Mucosa of descending colon (tissue), 3 donors: ENCODE measurements at regions of chr1 and their contacts with region 1.

Region 1: DNA sequence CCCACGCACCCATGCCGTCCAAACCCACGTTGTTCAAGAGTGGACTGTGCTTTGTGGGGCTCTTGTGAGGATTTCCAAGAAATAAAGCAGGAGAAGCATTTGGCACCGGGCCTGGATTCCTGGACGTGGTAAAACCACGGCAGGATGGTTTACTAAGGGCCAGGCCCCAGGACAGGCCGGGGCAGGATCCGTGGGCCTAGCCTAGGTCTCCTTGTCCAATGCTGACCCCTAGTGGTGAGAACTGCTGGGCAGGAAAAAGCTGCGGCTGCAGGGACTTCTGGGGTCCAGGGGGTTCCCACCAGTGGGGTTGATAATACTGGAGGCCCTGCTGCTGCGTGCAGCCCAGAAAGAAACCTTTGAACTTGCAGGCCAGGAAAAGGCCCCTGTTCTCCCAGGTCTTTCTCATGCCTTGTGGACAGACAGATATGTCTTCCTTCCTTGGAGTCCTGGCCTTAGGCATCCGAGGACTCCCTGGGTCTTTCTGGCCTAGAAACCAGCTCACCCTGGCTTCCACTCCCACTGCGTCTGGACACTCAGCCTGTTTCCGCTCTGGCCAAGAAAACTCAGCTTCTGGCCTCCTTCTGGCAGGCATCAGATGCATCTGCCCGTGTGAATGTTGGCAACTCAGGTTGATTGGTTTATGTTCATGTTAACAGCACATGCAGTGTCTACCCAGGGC is 106.9 kb upstream of the TMEM51 start:
- DNase-seq: peak; percentile 63 to 86 (median 70)
- ATAC-seq: peak; percentile 84
- H3K4me3 ChIP-seq: no peak overlapping the region
- H3K4me1 ChIP-seq: no peaks in the 10 kb centered on the region
- CTCF ChIP-seq: peak; percentile 83

Region 2: DNA sequence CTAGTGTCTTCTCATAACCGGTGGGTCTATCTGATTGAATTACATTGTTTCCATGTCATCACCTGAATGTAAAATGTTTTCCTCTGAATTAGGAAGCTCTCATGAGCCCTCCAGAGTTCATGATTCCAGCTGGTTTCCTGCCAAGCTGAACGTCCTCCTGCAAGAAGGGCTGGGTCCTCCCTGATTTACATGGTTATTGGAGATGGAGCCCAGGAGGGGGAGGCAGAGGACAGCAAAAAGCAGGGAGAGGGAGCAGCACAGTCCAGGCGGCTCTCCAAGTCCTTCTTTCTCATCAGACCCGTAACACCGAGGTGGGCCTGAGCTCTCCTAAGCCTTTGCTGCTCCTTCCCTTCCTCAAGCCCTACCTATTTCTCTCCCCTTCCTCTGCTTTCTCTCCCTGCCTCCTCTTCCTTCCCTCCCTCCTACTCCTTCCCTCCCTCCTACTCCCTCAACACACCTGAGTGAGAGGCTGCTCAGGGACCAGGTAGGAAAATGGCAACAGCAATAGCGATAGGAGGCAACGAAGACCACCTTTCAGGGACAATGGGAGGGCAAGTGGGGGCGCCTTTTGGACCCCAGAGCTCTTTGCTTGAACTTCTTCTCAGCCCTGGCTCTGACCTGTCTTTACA is 1080.7 kb before region 1 on chr1:
- intact Hi-C with region 1: loop called in 1 of 2 experiments (anchors 5 kb)
- DNase-seq: peak in 2 of 3 donors; percentile 49 to 52
- ATAC-seq: peak; percentile 79
- H3K4me3 ChIP-seq: no peak overlapping the region
- H3K4me1 ChIP-seq: no peaks in the 10 kb centered on the region
- CTCF ChIP-seq: no peak

Region 3: DNA sequence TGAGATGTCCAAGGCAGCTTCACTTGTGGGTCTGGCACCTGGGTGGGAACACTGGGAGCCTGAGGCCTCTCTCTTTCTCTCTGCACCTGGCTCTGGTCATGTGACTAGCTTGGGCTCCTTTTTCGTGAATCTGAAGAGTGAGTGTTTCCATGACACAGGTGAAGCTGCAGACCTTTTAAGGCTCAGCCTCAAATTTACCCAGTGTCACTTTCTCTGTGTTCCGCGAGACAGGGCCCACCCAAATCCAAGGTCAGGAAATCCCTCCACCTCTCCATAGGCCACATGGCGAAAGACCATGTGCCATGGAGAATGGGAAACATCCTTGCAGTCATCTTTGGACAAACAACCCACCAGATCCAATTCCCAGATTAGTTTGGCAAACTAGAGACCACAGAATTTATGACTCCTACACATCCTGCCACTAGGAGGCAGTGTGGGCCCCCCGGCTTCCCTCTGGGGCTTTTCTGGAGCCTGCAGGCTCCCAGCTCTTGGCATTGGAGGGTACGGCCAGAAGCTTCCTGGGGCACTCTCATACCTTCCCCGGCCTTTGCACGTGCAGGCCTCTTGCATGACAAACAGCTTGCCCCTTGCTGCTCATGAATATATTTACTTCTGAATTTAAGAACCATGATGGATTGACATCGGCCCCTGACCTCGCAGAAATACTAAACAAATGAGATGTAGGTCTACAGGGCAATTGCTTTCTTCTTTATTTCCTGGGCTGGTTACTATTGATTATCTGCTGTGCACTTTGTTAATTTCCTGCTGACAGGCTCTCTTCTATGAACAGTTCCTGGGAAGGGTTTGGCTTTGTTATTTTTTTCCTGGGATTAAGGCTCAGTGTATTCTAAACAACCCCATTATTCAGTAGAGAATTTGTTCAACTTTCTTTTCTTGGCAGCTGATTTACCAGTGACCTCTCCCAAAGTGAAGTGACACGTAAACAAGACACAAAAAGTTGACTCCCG is 267.4 kb before region 1 on chr1:
- intact Hi-C with region 1: loop called in 1 of 2 experiments (anchors 10 kb)
- DNase-seq: peak in 2 of 3 donors; percentile 52 to 57
- ATAC-seq: peak; percentile 53
- H3K4me3 ChIP-seq: no peak overlapping the region
- H3K4me1 ChIP-seq: no peaks in the 10 kb centered on the region
- CTCF ChIP-seq: peak; percentile 32

Region 4: DNA sequence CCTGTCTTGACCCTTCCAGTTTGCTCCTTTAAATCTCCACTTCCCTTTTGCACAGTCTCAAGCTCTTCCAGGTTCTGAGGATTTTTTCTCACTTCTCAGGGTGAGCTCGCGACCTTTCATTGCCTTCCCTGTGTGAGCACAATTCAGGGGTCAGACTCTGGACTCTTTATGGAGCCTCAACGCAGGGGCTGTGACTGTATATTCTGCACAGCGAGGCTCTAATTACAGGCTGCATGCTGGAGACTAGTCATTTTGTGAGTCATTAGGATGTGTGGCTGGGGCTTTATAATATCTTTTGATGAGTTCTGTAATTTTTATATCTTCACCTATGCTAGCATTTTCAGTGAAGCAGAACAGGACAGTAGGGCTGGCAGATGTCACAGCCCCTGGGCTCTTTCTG is 177.4 kb before region 1 on chr1:
- intact Hi-C with region 1: no loop called
- DNase-seq: no peak
- ATAC-seq: no peak
- H3K4me3 ChIP-seq: no peak overlapping the region
- H3K4me1 ChIP-seq: no peaks in the 10 kb centered on the region
- CTCF ChIP-seq: no peak

Region 5: DNA sequence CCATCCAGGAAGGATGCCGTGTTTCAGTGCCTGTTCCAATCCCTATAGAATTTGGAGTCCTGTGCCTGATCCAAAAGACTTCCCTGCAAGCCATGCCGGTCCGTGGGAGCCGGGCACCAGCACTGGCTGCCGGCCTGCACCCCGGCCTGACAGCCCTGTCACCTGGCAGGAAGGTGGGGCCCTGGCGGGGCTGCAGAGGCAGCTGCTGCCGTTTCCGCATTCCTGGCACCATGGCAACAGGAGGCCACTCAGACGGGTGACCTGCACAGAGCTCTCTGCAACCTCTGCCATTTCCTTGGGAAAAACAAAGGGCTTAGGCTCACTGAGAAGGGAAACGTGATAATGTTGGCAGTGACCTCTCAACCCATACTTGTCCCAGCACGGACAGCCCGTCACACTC is 43.7 kb after region 1 on chr1:
- intact Hi-C with region 1: no loop called
- DNase-seq: peak; percentile 87 to 90 (median 90)
- ATAC-seq: peak; percentile 100
- H3K4me3 ChIP-seq: no peak overlapping the region
- H3K4me1 ChIP-seq: peaks cover 8% of the 10 kb centered on the region
- CTCF ChIP-seq: no peak

Region 6: GRCh38 chr1:15178571-15179484 is 132.2 kb after region 1 on chr1:
- intact Hi-C with region 1: no loop called
- DNase-seq: no peak
- ATAC-seq: peak; percentile 66
- H3K4me3 ChIP-seq: no peak overlapping the region
- H3K4me1 ChIP-seq: peaks cover 31% of the 10 kb centered on the region
- CTCF ChIP-seq: no peak